A549 (cell line): ENCODE measurements at regions of chr14 and their contacts with region 1.

Region 1: DNA sequence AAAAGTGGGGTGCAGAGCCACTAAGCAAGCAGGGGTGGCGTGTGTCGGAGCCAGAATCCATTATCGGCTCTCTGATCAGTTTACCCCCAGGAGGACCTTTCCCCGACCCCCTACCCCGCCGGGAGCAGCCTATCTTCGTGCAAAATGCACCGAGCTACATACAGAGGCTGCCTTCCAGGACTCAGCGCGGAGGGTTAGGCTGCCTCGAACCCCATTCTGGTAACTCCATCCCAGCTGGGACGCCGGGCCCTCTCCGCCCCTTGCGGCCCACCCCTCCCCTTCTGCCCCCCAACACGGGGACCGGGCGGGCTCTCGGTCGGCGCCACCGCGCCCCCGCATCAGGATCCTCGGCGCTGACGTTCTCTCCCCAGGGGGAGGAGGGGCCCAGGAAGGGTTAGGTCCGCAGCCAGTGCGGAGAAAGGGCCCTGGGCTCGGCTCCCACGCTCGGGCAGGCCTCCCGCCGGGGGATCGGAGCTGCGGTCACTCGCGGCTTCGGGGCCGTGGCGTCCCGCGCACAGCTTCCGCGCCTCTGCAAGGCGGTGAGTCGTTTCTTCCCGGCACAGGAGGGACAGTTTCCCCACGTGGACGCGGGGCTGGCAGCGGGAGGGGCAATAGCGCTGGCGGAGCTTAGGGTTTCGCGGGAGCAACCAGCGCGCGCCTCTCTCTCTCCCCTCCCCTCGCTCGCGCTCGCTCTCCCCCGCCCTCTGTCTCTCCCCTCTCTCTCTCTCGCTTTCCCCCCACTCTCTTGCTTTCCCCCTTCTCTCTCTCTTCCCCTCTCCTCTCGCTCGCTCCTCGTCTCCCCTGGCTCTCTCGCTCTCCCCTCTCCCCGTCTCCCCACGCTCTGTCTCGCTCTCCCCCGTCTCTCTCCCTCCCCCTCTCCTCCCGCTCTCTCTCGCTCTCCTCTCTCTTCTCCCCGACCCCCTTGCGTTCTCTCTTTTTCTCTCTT is 12.5 kb upstream of the MAP3K9 start:
- DNase-seq: peak; percentile 42 to 62
- ATAC-seq: peak; percentile 58 to 71
- H3K4me3 ChIP-seq: peak overlapping the region; percentile 94
- H3K27ac ChIP-seq: peak overlapping the region; percentile 89 to 97
- H3K4me1 ChIP-seq: peaks cover 14% of the 10 kb centered on the region; the same call in 2 of the 3 replicates
- CTCF ChIP-seq: no peak
- EP300 ChIP-seq: no peak
- POLR2A ChIP-seq: no peak; the same call in 1 of the 2 replicates
- RAD21 ChIP-seq: no peak

Region 2: DNA sequence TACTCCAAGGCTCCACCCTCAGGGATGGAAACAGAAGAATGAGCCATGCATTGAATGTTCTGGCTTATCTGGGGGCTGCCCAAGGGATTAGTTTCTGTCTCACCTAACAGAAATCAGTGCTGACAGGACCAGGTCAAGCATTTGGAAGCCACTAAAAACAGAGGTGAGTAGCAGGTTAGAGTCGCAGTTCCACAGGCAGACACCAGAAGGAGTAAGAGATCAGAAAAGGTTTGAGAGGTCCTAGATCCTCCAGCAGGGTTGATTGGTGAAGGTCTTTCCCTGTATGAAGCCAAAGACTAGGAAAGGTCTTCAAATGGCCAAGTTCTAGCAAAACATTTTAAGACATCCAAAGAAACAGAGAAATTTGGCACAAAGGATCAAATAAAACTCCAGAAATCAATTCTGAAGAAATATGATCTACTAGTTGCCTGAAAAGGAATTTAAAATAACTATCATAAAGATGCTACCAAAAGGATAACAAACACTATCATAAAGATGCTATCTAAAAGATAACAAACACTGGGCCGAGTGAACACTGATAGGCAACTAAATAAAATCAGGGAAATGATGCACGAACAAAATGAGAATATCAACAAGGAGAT is 199.6 kb before region 1 on chr14:
- CTCF ChIA-PET with region 1: interaction called, 34 read pairs
- POLR2A ChIA-PET with region 1: no interaction called
- DNase-seq: peak; percentile 58 to 67
- ATAC-seq: peak; percentile 95 to 96
- H3K4me3 ChIP-seq: no peak overlapping the region
- H3K27ac ChIP-seq: no peak overlapping the region
- H3K4me1 ChIP-seq: no peaks in the 10 kb centered on the region
- CTCF ChIP-seq: peak; percentile 65
- EP300 ChIP-seq: no peak
- POLR2A ChIP-seq: no peak
- RAD21 ChIP-seq: peak; percentile 71 to 81

Region 3: DNA sequence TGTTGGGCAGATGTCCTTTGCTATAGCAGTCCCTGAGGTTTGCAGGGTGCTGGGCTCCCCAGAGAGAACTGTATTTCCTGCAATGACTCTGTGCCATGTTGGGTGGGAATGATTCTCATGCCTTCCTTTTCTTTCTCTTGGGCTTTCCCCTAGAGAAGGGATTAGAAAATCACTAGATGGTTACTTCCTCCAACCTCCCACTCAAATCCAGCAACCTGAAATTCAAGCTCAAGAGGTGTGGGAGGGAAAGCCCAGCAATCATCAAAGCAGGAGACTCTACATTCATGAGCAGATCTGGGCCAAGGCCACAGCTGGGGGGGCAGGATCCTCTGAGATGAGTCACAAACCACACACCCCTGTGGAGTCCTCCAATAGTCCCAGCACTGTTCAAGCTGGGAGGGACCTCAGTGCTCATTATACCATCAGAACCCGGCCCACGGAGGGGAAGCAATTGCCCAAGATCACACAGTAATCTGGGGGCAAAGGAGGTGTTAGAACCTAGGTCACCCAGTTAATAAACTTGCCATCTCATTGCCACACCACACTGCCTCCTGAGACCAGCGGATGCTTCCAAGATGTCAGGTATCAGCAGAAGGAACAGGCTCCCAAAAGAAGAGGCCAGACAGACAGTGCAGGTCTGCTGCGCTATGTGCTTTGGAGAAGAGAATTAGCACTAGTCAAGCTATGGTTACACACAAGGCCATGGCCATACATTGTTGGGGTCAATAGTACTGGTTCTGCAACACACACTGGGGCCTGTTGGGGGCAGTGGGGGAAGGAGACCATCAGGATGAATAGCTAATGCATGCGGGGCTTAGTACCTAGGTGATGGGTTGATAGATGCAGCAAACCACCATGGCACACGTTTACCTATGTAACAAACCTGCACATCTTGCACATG is 114.5 kb before region 1 on chr14:
- CTCF ChIA-PET with region 1: interaction called, 16 read pairs
- POLR2A ChIA-PET with region 1: no interaction called
- DNase-seq: peak in 1 of 2 experiments; percentile 32
- ATAC-seq: peak in 1 of 2 experiments; percentile 63; a peak in 4 of 6 replicates
- H3K4me3 ChIP-seq: no peak overlapping the region
- H3K27ac ChIP-seq: peak overlapping the region in 1 of 2 experiments; percentile 30; a peak in 1 of 6 replicates
- H3K4me1 ChIP-seq: peaks cover 18% of the 10 kb centered on the region
- CTCF ChIP-seq: no peak
- EP300 ChIP-seq: no peak
- POLR2A ChIP-seq: no peak
- RAD21 ChIP-seq: no peak

Region 4: DNA sequence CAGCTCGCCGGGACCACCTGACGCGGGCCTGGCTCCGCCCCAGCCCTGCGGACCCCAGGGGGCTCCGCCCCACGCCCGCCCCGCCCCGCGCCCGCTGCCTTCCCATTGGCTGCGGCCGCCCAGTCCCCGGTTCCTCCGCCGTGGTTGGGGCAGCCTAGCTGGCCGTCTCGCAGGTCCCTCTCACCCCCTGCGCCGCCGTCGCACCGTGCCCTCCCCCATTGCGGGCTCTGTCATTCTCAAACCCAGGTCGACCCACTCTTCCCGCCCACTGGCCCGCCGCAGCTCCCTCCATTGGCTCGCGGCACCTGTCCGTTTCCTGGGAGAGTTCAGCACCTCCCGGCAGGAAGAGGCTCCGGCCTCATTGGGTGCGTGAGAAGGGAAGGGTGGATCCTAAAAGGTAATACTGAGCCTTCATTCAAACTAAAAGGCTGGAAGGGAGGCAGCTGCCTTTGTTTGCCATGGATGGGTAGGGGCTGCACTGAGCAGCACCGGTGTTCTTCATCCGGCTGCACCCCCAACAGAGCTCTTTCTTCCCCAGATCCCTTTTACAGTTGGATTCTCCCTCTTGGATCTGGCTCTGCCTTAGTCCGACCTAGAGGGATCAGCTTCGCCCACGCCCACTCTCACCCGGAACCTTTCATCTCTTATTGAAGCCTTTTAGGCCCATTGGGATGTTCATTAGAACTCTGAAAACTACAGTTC is 12.2 kb before region 1 on chr14:
- CTCF ChIA-PET with region 1: interaction called, 20 read pairs
- POLR2A ChIA-PET with region 1: interaction called, 7 read pairs
- DNase-seq: peak; percentile 97
- ATAC-seq: peak; percentile 93 to 95
- H3K4me3 ChIP-seq: peak overlapping the region; percentile 72
- H3K27ac ChIP-seq: peak overlapping the region; percentile 81 to 91
- H3K4me1 ChIP-seq: peaks cover 28% of the 10 kb centered on the region
- CTCF ChIP-seq: no peak
- EP300 ChIP-seq: no peak
- POLR2A ChIP-seq: peak; percentile 42
- RAD21 ChIP-seq: no peak

Region 5: GRCh38 chr14:70907176-70907995 is 85.5 kb after region 1 on chr14 and contains the start of gene PCNX1:
- CTCF ChIA-PET with region 1: interaction called, 27 read pairs
- POLR2A ChIA-PET with region 1: interaction called, 5 read pairs
- DNase-seq: peak; percentile 85 to 87
- ATAC-seq: peak; percentile 85
- H3K4me3 ChIP-seq: peak within 1 kb of the TSS; percentile 89
- H3K27ac ChIP-seq: peak within 1 kb of the TSS; percentile 95
- H3K4me1 ChIP-seq: peaks cover 19% of the 10 kb centered on the region
- CTCF ChIP-seq: peak; percentile 89
- EP300 ChIP-seq: no peak
- POLR2A ChIP-seq: peak; percentile 55
- RAD21 ChIP-seq: peak; percentile 29 to 71; a peak in 4 of 5 replicates
- polyA plus RNA-seq, gene PCNX1: 45.0 and 50.0 TPM in 2 replicates

Region 6: GRCh38 chr14:70972107-70972976 is 150.5 kb after region 1 on chr14:
- CTCF ChIA-PET with region 1: interaction called, 60 read pairs
- POLR2A ChIA-PET with region 1: no interaction called
- DNase-seq: peak; percentile 21 to 86
- ATAC-seq: peak; percentile 94 to 97
- H3K4me3 ChIP-seq: no peak overlapping the region
- H3K27ac ChIP-seq: no peak overlapping the region
- H3K4me1 ChIP-seq: 0 out of 3 replicates have a peak, but pooled peaks cover under 1% of the 10 kb centered on the region
- CTCF ChIP-seq: peak; percentile 95
- EP300 ChIP-seq: no peak
- POLR2A ChIP-seq: no peak
- RAD21 ChIP-seq: peak; percentile 80 to 87

Region 7: GRCh38 chr14:71155743-71156142 is 333.9 kb after region 1 on chr14:
- CTCF ChIA-PET with region 1: no interaction called
- POLR2A ChIA-PET with region 1: no interaction called
- DNase-seq: no peak
- ATAC-seq: no peak; a peak in 1 of 6 replicates
- H3K4me3 ChIP-seq: no peak overlapping the region
- H3K27ac ChIP-seq: no peak overlapping the region
- H3K4me1 ChIP-seq: no peaks in the 10 kb centered on the region
- CTCF ChIP-seq: no peak
- EP300 ChIP-seq: no peak
- POLR2A ChIP-seq: no peak
- RAD21 ChIP-seq: no peak